Activated CD4-positive, alpha-beta T cell treated with anti-CD3 and anti-CD28 coated beads, Interleukin-2, amount 10 ng/mL, durations not matched to agents 24 days and 14 days (primary cell): ENCODE measurements at regions of chr15 and their contacts with region 1.

Region 1: GRCh38 chr15:63188926-63189871 is at the start of gene RAB8B:
- DNase-seq: peak; percentile 99
- H3K4me3 Mint-ChIP-seq: peak within 1 kb of the TSS; percentile 92
- H3K27ac Mint-ChIP-seq: peak within 1 kb of the TSS; percentile 92
- H3K4me1 Mint-ChIP-seq: peaks cover 39% of the 10 kb centered on the region
- H3K27me3 Mint-ChIP-seq: peaks cover 6% of the 10 kb centered on the region
- total RNA-seq, gene RAB8B: 186 and 187 TPM in 2 replicates

Region 2: DNA sequence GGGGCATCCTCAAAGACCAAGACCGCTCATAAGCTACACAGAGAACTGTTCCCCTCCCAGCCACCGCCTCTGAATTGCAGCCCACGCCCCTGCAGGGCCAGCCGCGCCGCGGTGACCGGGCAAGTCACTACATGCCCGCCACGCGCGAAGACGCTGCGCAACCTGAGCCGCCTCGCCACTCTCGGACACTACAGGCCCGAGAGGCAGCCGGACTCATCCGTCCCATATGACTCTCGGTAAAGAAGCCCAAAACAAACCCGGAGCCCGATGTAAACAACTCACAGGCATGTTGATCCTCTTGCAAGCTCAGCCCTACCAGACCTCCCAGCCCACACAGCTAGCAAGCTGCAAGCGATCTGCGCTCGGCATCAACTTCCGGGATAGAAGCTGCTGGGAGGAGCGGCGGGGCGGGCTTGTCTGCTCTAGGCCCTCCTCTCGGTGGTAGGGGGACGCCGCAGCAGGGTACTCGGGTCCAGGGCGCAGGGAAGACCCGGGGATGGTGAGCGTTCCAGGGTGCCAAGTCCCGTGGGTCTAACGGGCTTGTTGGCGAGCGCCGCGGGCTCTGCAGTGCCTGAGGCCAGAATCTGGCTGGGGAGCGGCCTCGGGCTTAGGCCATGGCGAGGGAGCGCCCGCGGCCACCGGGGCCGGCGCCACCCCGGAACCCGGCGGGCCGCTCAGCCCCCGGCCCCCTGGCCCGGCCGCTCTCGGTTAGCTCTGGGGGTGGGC is 31.9 kb before region 1 on chr15 and contains the start of gene RPS27L:
- intact Hi-C with region 1: loop called (anchors 1 kb)
- DNase-seq: peak; percentile 97
- H3K4me3 Mint-ChIP-seq: peak within 1 kb of the TSS; percentile 100
- H3K27ac Mint-ChIP-seq: peak within 1 kb of the TSS; percentile 100
- H3K4me1 Mint-ChIP-seq: peaks cover 16% of the 10 kb centered on the region
- H3K27me3 Mint-ChIP-seq: no peaks in the 10 kb centered on the region
- total RNA-seq, gene RPS27L: 167 and 179 TPM in 2 replicates

Region 3: GRCh38 chr15:63212050-63213004 is 23.1 kb after region 1 on chr15:
- intact Hi-C with region 1: loop called (anchors 1 kb)
- DNase-seq: no peak
- H3K4me3 Mint-ChIP-seq: peak overlapping the region; percentile 56
- H3K27ac Mint-ChIP-seq: peak overlapping the region; percentile 94
- H3K4me1 Mint-ChIP-seq: peaks cover 64% of the 10 kb centered on the region
- H3K27me3 Mint-ChIP-seq: no peaks in the 10 kb centered on the region

Region 4: GRCh38 chr15:63277038-63277892 is 88.1 kb after region 1 on chr15 and contains the start of gene APH1B:
- intact Hi-C with region 1: loop called (anchors 1 kb)
- DNase-seq: peak; percentile 95
- H3K4me3 Mint-ChIP-seq: peak within 1 kb of the TSS; percentile 93
- H3K27ac Mint-ChIP-seq: peak within 1 kb of the TSS; percentile 89
- H3K4me1 Mint-ChIP-seq: peaks cover 30% of the 10 kb centered on the region
- H3K27me3 Mint-ChIP-seq: no peaks in the 10 kb centered on the region
- total RNA-seq, gene APH1B: 3.7 and 3.8 TPM in 2 replicates

Region 5: DNA sequence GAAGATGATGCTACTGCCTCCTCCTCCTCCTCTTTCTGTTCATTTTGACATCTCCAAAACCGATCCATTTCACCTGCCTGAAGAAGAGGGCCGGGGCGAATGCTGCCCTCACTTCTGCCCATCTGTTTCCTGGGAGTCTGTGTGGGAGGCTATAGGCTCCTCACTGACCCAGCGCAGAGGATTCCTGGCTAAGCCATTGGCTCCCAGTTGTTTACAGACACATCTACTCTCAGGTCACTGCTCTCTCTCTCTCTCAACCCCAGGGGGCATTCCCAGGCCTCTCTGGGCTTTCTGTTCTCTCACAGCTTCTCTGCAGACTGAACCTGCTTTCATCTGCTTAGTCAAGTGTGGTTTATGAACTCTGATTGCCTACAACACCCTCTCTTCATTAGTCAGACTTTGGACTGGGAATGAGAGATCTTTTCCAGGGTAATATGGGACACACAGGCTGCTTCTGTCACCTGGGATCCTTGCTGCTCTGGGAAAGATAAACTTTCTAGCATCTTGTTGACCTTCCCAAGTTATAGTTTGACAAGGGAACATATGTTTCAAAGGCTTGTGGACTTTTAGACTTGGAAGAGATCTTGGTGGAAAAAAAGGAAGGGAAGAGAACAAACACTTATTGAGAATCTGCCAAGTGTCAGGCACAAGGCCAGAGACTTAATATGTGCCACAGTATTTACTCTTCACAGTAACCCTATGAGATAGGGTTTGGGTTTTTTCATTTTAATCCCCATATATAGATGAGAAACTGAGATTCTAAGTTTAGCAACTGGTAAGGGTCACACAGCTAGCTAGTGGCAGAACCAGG is 285.0 kb after region 1 on chr15:
- intact Hi-C with region 1: loop called (anchors 10 kb)
- DNase-seq: peak; percentile 85
- H3K4me3 Mint-ChIP-seq: peak overlapping the region; percentile 11
- H3K27ac Mint-ChIP-seq: peak overlapping the region; percentile 95
- H3K4me1 Mint-ChIP-seq: peaks cover 41% of the 10 kb centered on the region
- H3K27me3 Mint-ChIP-seq: no peaks in the 10 kb centered on the region